CD4-positive, alpha-beta T cell (primary cell): ENCODE measurements at regions of chr14 and their contacts with region 1.

Region 1: DNA sequence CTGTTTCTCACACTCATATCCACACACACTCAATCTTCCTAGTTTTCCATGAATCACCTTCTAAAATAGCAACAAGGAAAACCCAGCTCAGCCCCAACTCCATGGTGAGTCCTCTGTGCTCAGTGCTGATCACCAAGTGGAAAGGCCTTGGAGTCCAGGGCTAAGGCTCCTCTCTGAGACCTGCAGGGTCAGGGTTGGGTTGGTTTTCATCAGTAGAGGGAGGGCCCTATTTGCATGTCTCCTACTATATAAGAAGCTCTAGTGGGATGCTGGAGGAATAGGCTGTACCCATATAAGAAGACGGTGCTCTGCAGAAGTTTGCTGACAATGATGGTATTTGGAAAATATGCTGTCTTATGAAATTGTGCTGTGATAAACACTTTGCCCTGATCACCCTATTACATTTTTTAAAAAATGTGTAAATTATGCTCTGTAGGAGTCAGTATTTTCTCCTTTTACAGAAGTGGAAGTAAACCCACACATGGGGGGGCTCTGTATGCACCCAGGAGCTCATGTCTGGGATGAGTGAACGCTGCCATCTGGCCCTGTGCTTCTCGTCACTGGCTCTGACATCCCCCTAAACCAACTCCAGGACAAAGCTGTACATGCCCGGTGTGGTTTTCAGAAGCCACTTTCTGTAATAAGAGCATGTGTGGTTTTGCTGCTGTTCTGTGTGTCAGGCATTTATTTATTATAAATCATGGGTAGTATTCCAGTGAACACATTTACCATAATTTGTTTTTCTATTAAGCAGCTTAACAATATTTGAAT is 536.3 kb downstream of the TMEM121 start:
- DNase-seq: peak in 1 of 14 experiments; percentile 13
- ATAC-seq: no peak
- H3K4me3 ChIP-seq: no peak overlapping the region
- H3K4me3 Mint-ChIP-seq: no peak overlapping the region
- H3K27ac ChIP-seq: no peak overlapping the region
- H3K27ac Mint-ChIP-seq: no peak overlapping the region
- H3K4me1 ChIP-seq: peaks cover 17% of the 10 kb centered on the region
- H3K4me1 Mint-ChIP-seq: peaks cover 17% of the 10 kb centered on the region
- H3K27me3 ChIP-seq: peaks cover 3 to 4% of the 10 kb centered on the region in 2 experiments
- H3K27me3 Mint-ChIP-seq: peaks cover 12% of the 10 kb centered on the region
- CTCF ChIP-seq: no peak

Region 2: DNA sequence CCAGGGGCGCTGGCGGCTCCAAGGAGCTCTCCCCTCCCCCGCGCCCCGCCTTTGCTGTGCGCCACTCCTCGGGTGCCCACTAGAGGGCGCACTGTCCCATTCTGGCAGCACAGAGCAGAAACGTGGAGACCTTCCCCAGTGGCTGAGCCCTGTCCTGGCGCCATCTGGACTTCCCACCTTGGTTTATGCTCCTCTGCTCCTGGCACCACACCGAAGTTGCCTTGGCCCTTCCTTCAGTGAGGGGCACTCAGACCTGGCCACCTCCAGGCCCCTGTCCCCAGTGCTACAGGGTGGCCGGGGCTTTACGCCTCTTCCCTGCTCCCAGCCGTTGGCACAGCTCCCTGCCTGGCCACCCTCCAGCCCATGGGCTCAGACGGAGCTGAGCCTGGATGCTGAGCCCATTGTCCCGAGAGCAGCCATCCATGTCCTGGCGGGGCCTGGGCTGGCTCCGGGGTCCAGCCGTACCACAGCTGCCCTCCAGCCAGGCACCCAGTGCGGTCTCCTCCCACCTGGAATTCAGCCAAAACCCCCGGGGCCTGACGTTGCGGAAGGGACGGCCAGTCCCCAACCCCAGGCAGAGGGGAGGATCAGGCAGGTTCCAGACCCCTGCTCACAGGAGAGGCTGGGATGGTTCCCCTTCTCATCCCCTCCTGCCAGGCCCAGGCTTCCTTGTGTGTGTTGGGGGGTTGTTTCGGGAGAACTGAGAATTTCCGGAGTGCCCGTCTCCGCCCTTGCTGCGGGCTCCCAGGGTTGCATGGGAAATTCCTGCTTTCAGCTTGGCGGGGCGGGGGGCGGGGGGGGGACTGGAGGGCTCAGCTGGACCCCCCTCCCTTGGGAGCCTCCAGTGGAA is 581.5 kb before region 1 on chr14:
- CTCF ChIA-PET with region 1: no interaction called
- POLR2A ChIA-PET with region 1: no interaction called
- intact Hi-C with region 1: no loop called
- DNase-seq: peak; percentile 84 to 96 (median 91)
- ATAC-seq: peak; percentile 42
- H3K4me3 ChIP-seq: peak overlapping the region; percentile 61
- H3K4me3 Mint-ChIP-seq: peak overlapping the region; percentile 90
- H3K27ac ChIP-seq: peak overlapping the region; percentile 100
- H3K27ac Mint-ChIP-seq: peak overlapping the region; percentile 97
- H3K4me1 ChIP-seq: peaks cover 95% of the 10 kb centered on the region
- H3K4me1 Mint-ChIP-seq: peaks cover 65% of the 10 kb centered on the region
- H3K27me3 ChIP-seq: peaks cover 0 to under 1% of the 10 kb centered on the region in 2 experiments
- H3K27me3 Mint-ChIP-seq: no peaks in the 10 kb centered on the region
- CTCF ChIP-seq: peak; percentile 98

Region 3: DNA sequence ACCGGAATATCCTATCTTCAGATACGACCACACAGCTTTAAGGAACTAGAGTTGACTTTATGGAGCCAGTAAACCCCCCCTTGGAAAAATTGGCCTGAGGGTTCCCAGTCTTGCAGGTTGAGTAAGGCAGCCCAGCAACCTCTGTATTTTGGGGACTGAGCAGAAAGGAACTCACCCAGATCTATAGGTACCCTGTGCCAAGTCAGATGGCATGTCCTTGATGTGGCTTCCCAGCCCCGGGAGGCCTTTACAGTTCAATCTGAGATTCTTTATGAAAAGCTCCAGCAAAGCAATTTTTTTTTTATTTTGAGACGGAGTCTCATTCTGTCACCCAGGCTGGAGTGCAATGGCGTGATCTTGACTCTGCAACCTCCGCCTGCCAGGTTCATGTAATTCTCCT is 508.7 kb before region 1 on chr14:
- CTCF ChIA-PET with region 1: no interaction called
- POLR2A ChIA-PET with region 1: no interaction called
- intact Hi-C with region 1: loop called in 1 of 2 experiments (anchors 10 kb)
- DNase-seq: no peak
- ATAC-seq: no peak
- H3K4me3 ChIP-seq: no peak overlapping the region
- H3K4me3 Mint-ChIP-seq: no peak overlapping the region
- H3K27ac ChIP-seq: no peak overlapping the region
- H3K27ac Mint-ChIP-seq: no peak overlapping the region
- H3K4me1 ChIP-seq: no peaks in the 10 kb centered on the region
- H3K4me1 Mint-ChIP-seq: no peaks in the 10 kb centered on the region
- H3K27me3 ChIP-seq: no peaks in the 10 kb centered on the region
- H3K27me3 Mint-ChIP-seq: peaks cover 28% of the 10 kb centered on the region
- CTCF ChIP-seq: no peak

Region 4: GRCh38 chr14:105944632-105945610 is 117.8 kb before region 1 on chr14:
- CTCF ChIA-PET with region 1: no interaction called
- POLR2A ChIA-PET with region 1: no interaction called
- intact Hi-C with region 1: no loop called
- DNase-seq: peak; percentile 48 to 85 (median 69)
- ATAC-seq: peak; percentile 75
- H3K4me3 ChIP-seq: no peak overlapping the region
- H3K4me3 Mint-ChIP-seq: no peak overlapping the region
- H3K27ac ChIP-seq: no peak overlapping the region
- H3K27ac Mint-ChIP-seq: no peak overlapping the region
- H3K4me1 ChIP-seq: peaks cover 17% of the 10 kb centered on the region
- H3K4me1 Mint-ChIP-seq: peaks cover 12% of the 10 kb centered on the region
- H3K27me3 ChIP-seq: no peaks in the 10 kb centered on the region
- H3K27me3 Mint-ChIP-seq: peaks cover 5% of the 10 kb centered on the region
- CTCF ChIP-seq: peak; percentile 86